ENCODE measurements at regions of chr2 and their contacts with region 1.

Region 1: GRCh38 chr2:219689676-219690628 is 62.5 kb downstream of the SLC4A3 start:
- DNase-seq: peak; percentile 42 to 49
- H3K4me3 ChIP-seq: no peak overlapping the region
- H3K27ac ChIP-seq: peak overlapping the region; percentile 99
- H3K4me1 ChIP-seq: peaks cover 55% of the 10 kb centered on the region
- H3K27me3 ChIP-seq: no peaks in the 10 kb centered on the region
- CTCF ChIP-seq: peak; percentile 73

Region 2: GRCh38 chr2:219160186-219161017 is 529.5 kb before region 1 on chr2 and contains the start of gene NHEJ1:
- CTCF ChIA-PET with region 1: no interaction called
- POLR2A ChIA-PET with region 1: no interaction called
- intact Hi-C with region 1: loop called (anchors 5 kb)
- DNase-seq: peak; percentile 79 to 95
- H3K4me3 ChIP-seq: peak within 1 kb of the TSS; percentile 72
- H3K27ac ChIP-seq: peak within 1 kb of the TSS; percentile 57
- H3K4me1 ChIP-seq: 0 out of 2 replicates have a peak, but pooled peaks cover 8% of the 10 kb centered on the region
- H3K27me3 ChIP-seq: no peaks in the 10 kb centered on the region
- CTCF ChIP-seq: peak; percentile 96
- total RNA-seq, gene NHEJ1: 9.8 and 11.2 TPM in 2 replicates

Region 3: DNA sequence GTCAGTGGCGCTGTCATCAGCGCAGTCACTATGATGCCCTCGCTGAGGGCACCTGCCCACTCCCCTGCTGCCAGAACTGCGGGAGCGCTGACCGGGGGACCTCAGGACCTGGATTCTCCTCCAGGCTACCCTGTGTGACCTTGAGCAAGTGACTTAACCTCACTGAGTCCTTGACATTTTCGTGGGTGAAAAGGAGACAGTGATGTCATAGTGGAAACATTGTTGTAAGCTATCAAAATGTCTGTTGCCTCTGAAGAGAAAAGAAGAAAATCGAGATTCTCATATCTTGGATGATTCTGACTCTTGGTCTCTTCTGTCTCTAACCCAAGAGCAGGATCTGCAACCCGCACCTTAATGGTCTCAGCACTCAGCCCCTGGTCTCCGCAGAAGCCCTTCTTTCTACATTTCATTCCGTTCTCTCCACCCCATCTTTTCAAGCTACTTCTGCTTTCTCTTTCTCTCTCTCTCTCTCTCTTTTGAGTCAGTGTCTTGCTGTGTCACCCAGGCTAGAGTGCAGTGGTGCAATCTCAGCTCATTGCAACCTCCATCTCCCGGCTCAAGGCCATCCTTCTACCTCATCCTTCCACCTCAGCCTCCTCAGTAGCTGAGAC is 435.3 kb before region 1 on chr2:
- CTCF ChIA-PET with region 1: no interaction called
- POLR2A ChIA-PET with region 1: no interaction called
- intact Hi-C with region 1: no loop called
- DNase-seq: no peak
- H3K4me3 ChIP-seq: peak overlapping the region; percentile 87
- H3K27ac ChIP-seq: no peak overlapping the region
- H3K4me1 ChIP-seq: peaks cover 39% of the 10 kb centered on the region
- H3K27me3 ChIP-seq: no peaks in the 10 kb centered on the region
- CTCF ChIP-seq: no peak

Region 4: DNA sequence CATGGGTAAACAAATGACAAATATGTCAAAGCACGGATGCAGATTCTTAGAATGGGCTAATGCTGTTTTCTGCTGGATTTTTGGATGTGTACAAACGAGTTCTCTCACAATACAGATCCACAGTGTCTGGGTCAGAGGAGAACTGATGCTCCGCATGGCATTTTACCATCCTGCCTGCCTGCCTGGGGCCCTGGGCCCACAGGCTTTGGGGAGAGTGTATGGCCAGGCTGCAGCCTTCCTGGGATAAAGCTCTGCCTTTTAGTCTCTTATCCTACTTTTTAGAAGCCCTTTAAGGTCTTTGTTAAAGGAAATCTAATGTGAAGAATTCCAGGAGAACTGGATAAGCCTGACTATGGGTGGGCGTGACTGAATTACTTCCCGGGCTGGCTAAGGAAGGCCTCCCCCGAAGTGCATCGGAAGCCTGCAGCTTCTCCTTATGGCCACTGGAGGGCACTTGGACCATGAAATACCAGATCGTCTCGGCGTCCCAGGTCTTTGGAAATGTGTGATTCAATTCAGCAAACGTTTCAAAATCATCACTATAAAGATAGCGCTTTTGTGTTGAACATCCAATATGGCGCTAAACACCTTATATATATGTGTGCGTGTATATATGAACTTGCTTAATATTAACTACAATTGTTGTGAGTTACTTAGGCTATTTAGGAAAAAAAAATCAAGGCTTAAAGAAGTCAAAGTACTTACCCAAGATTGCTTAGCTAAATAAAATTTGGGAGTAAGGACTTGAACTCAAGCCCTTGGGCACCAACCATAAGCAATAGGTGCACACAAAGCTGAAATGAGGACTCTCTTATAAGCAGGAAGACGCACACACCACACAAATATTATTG is 287.1 kb before region 1 on chr2:
- CTCF ChIA-PET with region 1: no interaction called
- POLR2A ChIA-PET with region 1: no interaction called
- intact Hi-C with region 1: loop called (anchors 2 kb)
- DNase-seq: peak; percentile 67 to 78
- H3K4me3 ChIP-seq: no peak overlapping the region
- H3K27ac ChIP-seq: no peak overlapping the region
- H3K4me1 ChIP-seq: peaks cover 36% of the 10 kb centered on the region
- H3K27me3 ChIP-seq: no peaks in the 10 kb centered on the region
- CTCF ChIP-seq: peak; percentile 92

Region 5: GRCh38 chr2:219543601-219544358 is 146.2 kb before region 1 on chr2 and contains the starts of genes CHPF and TMEM198:
- CTCF ChIA-PET with region 1: interaction called, 8 read pairs
- POLR2A ChIA-PET with region 1: interaction called, 4 read pairs
- intact Hi-C with region 1: loop called (anchors 1 kb)
- DNase-seq: peak; percentile 91 to 98
- H3K4me3 ChIP-seq: peak within 1 kb of the TSS; percentile 65
- H3K27ac ChIP-seq: peak within 1 kb of the TSS; percentile 55
- H3K4me1 ChIP-seq: no peaks in the 10 kb centered on the region; the same call in 1 of the 2 replicates
- H3K27me3 ChIP-seq: no peaks in the 10 kb centered on the region
- CTCF ChIP-seq: no peak
- total RNA-seq, gene CHPF: 78.2 and 89.7 TPM in 2 replicates
- total RNA-seq, gene TMEM198: 3.6 and 5.8 TPM in 2 replicates

Region 6: DNA sequence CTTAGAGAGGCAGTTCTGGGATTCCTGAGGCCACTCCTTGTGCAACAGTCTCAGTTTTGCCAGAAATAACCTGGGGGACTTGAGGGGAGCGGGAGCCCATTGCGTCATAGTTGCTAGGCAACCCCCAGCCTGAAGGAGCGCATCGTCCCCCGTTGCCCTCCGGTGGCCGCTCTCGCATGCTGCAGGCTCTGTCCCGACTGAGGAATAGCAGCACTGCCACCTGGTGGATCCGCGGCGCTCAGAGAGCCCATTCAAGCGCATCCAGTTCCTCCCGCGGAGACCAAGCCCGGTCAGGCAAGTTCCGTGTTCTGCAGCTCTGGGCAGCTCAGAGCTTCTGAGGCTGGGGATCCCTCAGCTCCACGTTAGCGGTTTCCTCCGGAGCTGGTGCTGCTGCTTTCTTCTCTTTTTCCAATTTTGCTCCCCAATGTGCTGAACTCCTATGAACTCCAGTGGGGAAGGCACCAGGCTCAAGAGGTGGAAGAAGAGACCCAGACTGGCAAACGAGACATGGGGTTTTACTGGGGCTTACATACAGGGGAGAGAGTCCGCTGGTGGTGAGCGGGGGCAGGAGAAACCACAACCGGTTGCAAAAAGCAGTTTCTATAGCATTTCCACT is 47.4 kb before region 1 on chr2:
- CTCF ChIA-PET with region 1: interaction called, 7 read pairs
- POLR2A ChIA-PET with region 1: interaction called, 12 read pairs
- intact Hi-C with region 1: loop called (anchors 1 kb)
- DNase-seq: peak; percentile 83 to 93
- H3K4me3 ChIP-seq: no peak overlapping the region
- H3K27ac ChIP-seq: no peak overlapping the region
- H3K4me1 ChIP-seq: peaks cover 18% of the 10 kb centered on the region
- H3K27me3 ChIP-seq: no peaks in the 10 kb centered on the region
- CTCF ChIP-seq: peak; percentile 93